Sigmoid colon (tissue), 7 donors: ENCODE measurements at regions of chr9 and their contacts with region 1.

Region 1: DNA sequence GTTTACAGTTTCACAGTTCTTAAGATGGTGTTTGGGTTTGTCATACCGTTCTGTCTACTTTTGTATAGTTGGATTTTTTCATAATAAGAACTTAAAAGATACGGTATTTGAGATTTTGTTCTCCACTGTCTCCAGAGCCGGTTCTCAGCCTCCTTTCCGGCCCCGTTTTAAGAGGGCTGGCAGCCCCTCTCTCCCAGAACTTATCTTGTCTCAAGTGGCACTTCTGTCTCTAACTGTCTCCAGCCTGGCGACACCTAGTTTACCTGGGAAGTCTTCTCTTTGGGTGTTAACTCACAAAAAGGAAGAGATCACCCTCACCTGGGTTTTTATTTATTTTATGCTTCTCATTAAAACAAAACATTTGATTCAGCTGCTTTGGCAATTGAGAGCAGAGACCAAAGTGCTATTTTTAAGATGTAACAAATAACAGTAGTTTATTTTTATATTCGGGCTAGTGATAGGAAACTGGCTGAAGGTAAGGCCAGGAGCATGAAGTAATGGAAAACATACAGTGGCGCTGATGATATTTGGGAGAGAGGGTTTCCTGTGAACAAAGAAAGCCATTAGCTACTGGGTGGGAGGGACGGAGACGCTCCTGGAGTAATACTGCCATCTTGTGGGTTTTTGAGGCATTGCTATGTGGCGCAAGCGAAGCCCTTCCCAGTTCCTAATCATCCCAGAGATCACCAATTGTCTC is 48.3 kb downstream of the ACER2 start:
- DNase-seq: peak; percentile 84
- H3K4me3 ChIP-seq: peak overlapping the region in 3 of 4 donors; percentile 2 to 29 (median 15)
- H3K27ac ChIP-seq: peak overlapping the region in 3 of 4 donors; percentile 13 to 45 (median 33)
- H3K4me1 ChIP-seq: peaks cover 0 to 11% (median 4%) of the 10 kb centered on the region in 4 donors
- H3K27me3 ChIP-seq: no peaks in the 10 kb centered on the region
- CTCF ChIP-seq: peak; percentile 91 to 97 (median 92)
- EP300 ChIP-seq: no peak
- POLR2A ChIP-seq: no peak

Region 2: DNA sequence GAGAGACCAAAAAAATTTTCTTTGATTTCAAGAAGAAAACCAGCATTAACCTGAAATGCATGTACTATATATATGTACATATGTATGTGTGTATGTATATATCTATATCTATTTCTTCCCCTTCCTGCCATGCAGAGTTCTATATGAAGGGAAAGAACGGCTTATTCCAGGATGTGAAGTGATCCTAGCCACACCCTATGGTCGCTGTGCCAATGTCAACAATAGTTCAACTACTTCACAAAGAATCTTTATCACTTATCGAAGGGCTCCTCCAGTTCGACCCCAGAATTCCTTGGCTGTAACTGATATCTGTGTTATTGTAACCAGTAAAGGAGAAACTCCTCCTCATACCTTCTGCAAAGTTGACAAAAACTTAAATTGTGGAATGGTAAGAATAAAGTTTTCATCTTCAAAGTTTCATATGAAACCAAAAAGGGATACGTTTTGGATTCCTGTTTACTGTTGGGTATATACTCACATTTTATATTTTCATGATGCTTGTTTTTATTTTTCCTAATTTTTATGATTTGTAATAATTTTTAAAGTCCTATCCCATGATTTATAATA is 170.4 kb before region 1 on chr9:
- intact Hi-C with region 1: no loop called
- DNase-seq: no peak
- H3K4me3 ChIP-seq: no peak overlapping the region
- H3K27ac ChIP-seq: no peak overlapping the region
- H3K4me1 ChIP-seq: peaks cover 0 to 20% (median 17%) of the 10 kb centered on the region in 4 donors
- H3K27me3 ChIP-seq: no peaks in the 10 kb centered on the region
- CTCF ChIP-seq: no peak
- EP300 ChIP-seq: no peak
- POLR2A ChIP-seq: no peak

Region 3: DNA sequence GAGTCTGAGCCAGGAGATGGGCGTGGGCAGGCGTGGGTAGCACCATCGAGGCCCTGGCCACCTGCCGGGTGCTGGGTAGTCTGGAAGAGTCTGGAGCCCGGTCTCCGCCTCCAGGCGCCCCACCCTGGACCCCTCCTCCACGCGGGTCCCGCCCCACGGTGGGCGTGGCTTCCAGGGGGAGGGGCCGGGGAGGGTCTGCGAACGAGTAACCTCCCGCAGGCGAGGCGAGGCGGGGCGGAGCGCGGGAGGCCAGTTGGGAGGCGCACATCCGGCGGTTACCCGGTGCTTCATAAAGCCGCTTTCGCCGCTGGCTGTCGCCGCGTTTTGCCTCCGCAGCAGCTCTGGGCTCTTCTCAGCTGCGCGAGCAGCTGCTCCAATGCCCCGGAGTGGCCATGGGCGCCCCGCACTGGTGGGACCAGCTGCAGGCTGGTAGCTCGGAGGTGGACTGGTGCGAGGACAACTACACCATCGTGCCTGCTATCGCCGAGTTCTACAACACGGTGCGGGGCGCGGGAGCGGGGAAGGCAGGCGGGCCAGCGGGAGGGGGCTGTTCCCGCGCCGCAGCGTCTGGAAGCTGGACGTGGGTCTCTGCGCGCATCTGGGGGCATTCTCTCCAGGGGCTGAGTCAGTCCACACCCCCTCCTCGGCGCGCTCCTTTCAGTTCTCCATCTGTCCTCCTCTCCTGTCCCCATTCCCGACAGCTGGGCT is 48.3 kb before region 1 on chr9 and contains the start of gene ACER2:
- intact Hi-C with region 1: loop called (anchors 2 kb)
- DNase-seq: peak; percentile 96
- H3K4me3 ChIP-seq: peak within 1 kb of the TSS; percentile 81 to 85 (median 83)
- H3K27ac ChIP-seq: peak within 1 kb of the TSS; percentile 80 to 87 (median 86)
- H3K4me1 ChIP-seq: peaks cover 0 to 19% (median 11%) of the 10 kb centered on the region in 4 donors
- H3K27me3 ChIP-seq: no peaks in the 10 kb centered on the region
- CTCF ChIP-seq: no peak
- EP300 ChIP-seq: no peak
- POLR2A ChIP-seq: peak; percentile 78 to 86
- total RNA-seq, gene ACER2: 3.1 to 4.3 (median 3.4) TPM

Region 4: GRCh38 chr9:19799784-19800183 is 342.6 kb after region 1 on chr9:
- intact Hi-C with region 1: no loop called
- DNase-seq: no peak
- H3K4me3 ChIP-seq: no peak overlapping the region
- H3K27ac ChIP-seq: no peak overlapping the region
- H3K4me1 ChIP-seq: no peaks in the 10 kb centered on the region
- H3K27me3 ChIP-seq: no peaks in the 10 kb centered on the region
- CTCF ChIP-seq: no peak
- EP300 ChIP-seq: no peak
- POLR2A ChIP-seq: no peak